CD4-positive, alpha-beta T cell (primary cell): ENCODE measurements at regions of chr7 and their contacts with region 1.

Region 1: GRCh38 chr7:151341357-151342101 is at the start of gene NUB1:
- DNase-seq: peak; percentile 81 to 98 (median 90)
- ATAC-seq: peak; percentile 90
- H3K4me3 ChIP-seq: peak within 1 kb of the TSS; percentile 88
- H3K4me3 Mint-ChIP-seq: peak within 1 kb of the TSS; percentile 93
- H3K27ac ChIP-seq: peak within 1 kb of the TSS; percentile 55 to 88
- H3K27ac Mint-ChIP-seq: peak within 1 kb of the TSS; percentile 92
- H3K4me1 ChIP-seq: peaks cover 34% of the 10 kb centered on the region
- H3K4me1 Mint-ChIP-seq: peaks cover 49% of the 10 kb centered on the region
- H3K27me3 ChIP-seq: no peaks in the 10 kb centered on the region
- H3K27me3 Mint-ChIP-seq: no peaks in the 10 kb centered on the region
- CTCF ChIP-seq: no peak
- total RNA-seq, gene NUB1: 86.0 to 90.4 TPM

Region 2: GRCh38 chr7:151315038-151315655 is 26.4 kb before region 1 on chr7:
- CTCF ChIA-PET with region 1: interaction called, 25 read pairs
- POLR2A ChIA-PET with region 1: interaction called, 8 read pairs
- intact Hi-C with region 1: loop called in 1 of 2 experiments (anchors 2 kb)
- DNase-seq: peak; percentile 60 to 90 (median 74)
- ATAC-seq: peak; percentile 95
- H3K4me3 ChIP-seq: no peak overlapping the region
- H3K4me3 Mint-ChIP-seq: no peak overlapping the region
- H3K27ac ChIP-seq: no peak overlapping the region
- H3K27ac Mint-ChIP-seq: no peak overlapping the region
- H3K4me1 ChIP-seq: peaks cover 9% of the 10 kb centered on the region
- H3K4me1 Mint-ChIP-seq: peaks cover 9% of the 10 kb centered on the region
- H3K27me3 ChIP-seq: no peaks in the 10 kb centered on the region
- H3K27me3 Mint-ChIP-seq: no peaks in the 10 kb centered on the region
- CTCF ChIP-seq: peak; percentile 93

Region 3: GRCh38 chr7:151381348-151382078 is 40.0 kb after region 1 on chr7:
- CTCF ChIA-PET with region 1: no interaction called
- POLR2A ChIA-PET with region 1: no interaction called
- intact Hi-C with region 1: no loop called
- DNase-seq: peak; percentile 24 to 90 (median 57)
- ATAC-seq: peak; percentile 82
- H3K4me3 ChIP-seq: peak overlapping the region; percentile 58
- H3K4me3 Mint-ChIP-seq: no peak overlapping the region
- H3K27ac ChIP-seq: peak overlapping the region; percentile 29 to 44
- H3K27ac Mint-ChIP-seq: peak overlapping the region; percentile 84
- H3K4me1 ChIP-seq: peaks cover 21% of the 10 kb centered on the region
- H3K4me1 Mint-ChIP-seq: peaks cover 13% of the 10 kb centered on the region
- H3K27me3 ChIP-seq: peaks cover 4 to 7% of the 10 kb centered on the region in 2 experiments
- H3K27me3 Mint-ChIP-seq: peaks cover 18% of the 10 kb centered on the region
- CTCF ChIP-seq: no peak

Region 4: DNA sequence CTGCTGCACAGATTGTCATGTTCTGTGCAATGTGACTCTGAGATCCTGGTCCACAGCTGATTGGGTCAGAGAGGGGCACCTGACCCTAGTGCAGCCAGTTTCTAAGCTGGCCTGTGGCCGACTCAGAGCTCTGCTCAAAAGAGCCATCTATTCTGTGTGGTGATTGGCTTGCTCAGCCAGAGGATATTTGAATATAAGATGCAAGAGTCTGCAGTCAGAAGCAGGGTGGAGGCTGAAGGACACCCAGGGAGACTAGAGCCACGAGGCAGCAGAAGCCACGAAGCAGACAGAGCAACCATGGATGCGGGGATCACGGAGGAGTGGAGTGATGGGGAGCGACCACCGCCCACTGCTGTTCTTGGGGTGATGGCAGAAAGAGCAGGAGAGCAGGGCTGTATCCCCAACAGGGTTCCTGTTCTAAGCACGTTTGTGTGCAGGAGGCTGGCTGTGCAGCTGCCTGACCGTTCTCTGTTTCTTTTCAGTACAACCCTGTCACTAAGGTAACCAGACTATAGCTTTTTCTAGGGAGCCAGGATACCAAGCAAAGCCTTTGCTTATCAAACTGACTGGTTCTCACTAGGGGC is 197.7 kb after region 1 on chr7:
- CTCF ChIA-PET with region 1: no interaction called
- POLR2A ChIA-PET with region 1: no interaction called
- intact Hi-C with region 1: no loop called
- DNase-seq: no peak
- ATAC-seq: no peak
- H3K4me3 ChIP-seq: no peak overlapping the region
- H3K4me3 Mint-ChIP-seq: no peak overlapping the region
- H3K27ac ChIP-seq: no peak overlapping the region
- H3K27ac Mint-ChIP-seq: no peak overlapping the region
- H3K4me1 ChIP-seq: peaks cover 3% of the 10 kb centered on the region
- H3K4me1 Mint-ChIP-seq: peaks cover 10% of the 10 kb centered on the region
- H3K27me3 ChIP-seq: no peaks in the 10 kb centered on the region
- H3K27me3 Mint-ChIP-seq: peaks cover 16% of the 10 kb centered on the region
- CTCF ChIP-seq: no peak

Region 5: DNA sequence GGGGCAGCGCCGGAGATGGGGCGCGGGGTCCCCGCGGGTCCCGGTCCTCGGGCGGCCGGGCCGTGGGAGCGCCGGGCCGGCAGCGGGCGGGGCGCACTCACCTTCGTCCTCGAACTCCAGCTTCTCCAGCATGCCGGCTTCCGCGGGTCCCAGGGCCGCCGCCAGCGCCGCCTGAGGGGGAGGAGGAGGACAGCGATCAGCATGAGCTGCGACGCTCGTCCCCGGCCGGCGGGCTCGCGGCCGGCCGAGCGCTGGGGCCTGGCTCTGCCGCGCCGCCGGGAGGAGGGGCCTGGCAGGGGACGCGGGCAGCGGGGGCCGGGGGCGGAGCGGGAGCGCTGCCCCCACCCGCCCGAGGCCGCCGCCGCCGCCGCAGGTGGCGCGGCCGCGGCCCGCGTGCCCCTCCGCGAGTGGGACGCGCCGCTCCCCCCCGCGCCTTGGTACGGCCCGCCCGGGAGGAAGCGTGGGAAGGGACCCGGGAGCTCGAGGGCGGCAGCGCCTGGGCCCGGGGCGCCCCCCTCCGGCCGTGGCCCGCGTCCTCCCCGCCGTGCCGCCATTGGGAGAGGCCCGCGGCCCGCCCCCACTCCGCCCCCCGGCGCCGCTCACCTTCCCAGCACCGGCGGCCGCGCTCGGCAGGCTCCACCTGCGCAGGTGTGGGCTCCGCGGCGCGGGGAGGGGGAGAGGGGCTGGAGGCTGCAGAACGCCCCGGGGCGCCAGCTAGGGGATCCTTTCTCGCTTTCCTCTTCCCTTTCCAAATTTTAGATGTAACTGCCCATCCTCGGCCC is 290.6 kb after region 1 on chr7:
- CTCF ChIA-PET with region 1: no interaction called
- POLR2A ChIA-PET with region 1: interaction called, 8 read pairs
- intact Hi-C with region 1: loop called in 1 of 2 experiments (anchors 5 kb)
- DNase-seq: peak; percentile 76 to 96 (median 89)
- ATAC-seq: peak; percentile 83
- H3K4me3 ChIP-seq: peak overlapping the region; percentile 68
- H3K4me3 Mint-ChIP-seq: peak overlapping the region; percentile 95
- H3K27ac ChIP-seq: peak overlapping the region; percentile 75 to 82
- H3K27ac Mint-ChIP-seq: peak overlapping the region; percentile 99
- H3K4me1 ChIP-seq: peaks cover 15% of the 10 kb centered on the region
- H3K4me1 Mint-ChIP-seq: peaks cover 45% of the 10 kb centered on the region
- H3K27me3 ChIP-seq: no peaks in the 10 kb centered on the region
- H3K27me3 Mint-ChIP-seq: no peaks in the 10 kb centered on the region
- CTCF ChIP-seq: no peak